GM12878 (cell line): ENCODE measurements at regions of chr2 and their contacts with region 1.

Region 1: GRCh38 chr2:157777427-157777826 is 98.7 kb downstream of the ACVR1 start:
- DNase-seq: no peak
- ATAC-seq: no peak
- H3K4me3 ChIP-seq: no peak overlapping the region
- H3K27ac ChIP-seq: no peak overlapping the region
- H3K4me1 ChIP-seq: no peaks in the 10 kb centered on the region
- H3K27me3 ChIP-seq: peaks cover 0 to 1% of the 10 kb centered on the region in 2 experiments; a peak in 3 of 4 replicates
- CTCF ChIP-seq: peak; percentile 18 to 37 (median 34); a peak in 4 of 6 replicates
- EP300 ChIP-seq: no peak
- POLR2A ChIP-seq: no peak
- RAD21 ChIP-seq: peak; percentile 60

Region 2: GRCh38 chr2:158006961-158007719 is 229.7 kb after region 1 on chr2:
- CTCF ChIA-PET with region 1: interaction called, 3 read pairs
- POLR2A ChIA-PET with region 1: no interaction called
- RAD21 ChIA-PET with region 1: no interaction called
- SMC1A ChIA-PET with region 1: no interaction called
- in situ Hi-C with region 1: loop called (anchors 10 kb)
- intact Hi-C with region 1: loop called (anchors 1 kb)
- DNase-seq: no peak
- ATAC-seq: peak; percentile 72
- H3K4me3 ChIP-seq: no peak overlapping the region
- H3K27ac ChIP-seq: no peak overlapping the region
- H3K4me1 ChIP-seq: no peaks in the 10 kb centered on the region
- H3K27me3 ChIP-seq: peaks cover 0 to 3% of the 10 kb centered on the region in 2 experiments; a peak in 1 of 4 replicates
- CTCF ChIP-seq: 0 out of 6 replicates have a peak, but pooled peaks of 1 of the 3 experiments have one; percentile 12
- EP300 ChIP-seq: no peak
- POLR2A ChIP-seq: no peak
- RAD21 ChIP-seq: no peak

Region 3: DNA sequence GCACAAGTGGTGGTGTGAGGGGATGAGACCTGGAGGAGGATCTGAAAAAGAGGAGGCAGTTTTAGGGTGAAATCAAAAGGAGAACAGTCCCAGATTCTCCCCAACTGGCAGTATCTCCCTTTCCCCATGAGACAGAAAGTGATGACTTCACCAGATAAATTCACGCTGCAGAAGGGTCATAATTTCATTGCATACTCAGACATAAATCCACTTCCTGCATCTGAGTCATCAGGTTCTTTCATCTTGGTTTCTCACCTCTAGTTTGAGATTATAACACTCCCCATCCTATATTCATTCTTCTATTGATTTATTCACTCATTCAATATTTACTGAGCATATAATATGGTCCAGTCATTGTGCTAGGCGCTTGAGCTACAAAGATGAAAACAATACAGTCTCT is 614.4 kb after region 1 on chr2:
- CTCF ChIA-PET with region 1: no interaction called
- POLR2A ChIA-PET with region 1: no interaction called
- RAD21 ChIA-PET with region 1: no interaction called
- SMC1A ChIA-PET with region 1: no interaction called
- in situ Hi-C with region 1: no loop called
- intact Hi-C with region 1: no loop called
- DNase-seq: no peak
- ATAC-seq: peak; percentile 70
- H3K4me3 ChIP-seq: no peak overlapping the region
- H3K27ac ChIP-seq: no peak overlapping the region
- H3K4me1 ChIP-seq: no peaks in the 10 kb centered on the region
- H3K27me3 ChIP-seq: no peaks in the 10 kb centered on the region
- CTCF ChIP-seq: no peak
- EP300 ChIP-seq: no peak
- POLR2A ChIP-seq: no peak
- RAD21 ChIP-seq: no peak